PC-3 (cell line): ENCODE measurements at regions of chr7 and their contacts with region 1.

Region 1: DNA sequence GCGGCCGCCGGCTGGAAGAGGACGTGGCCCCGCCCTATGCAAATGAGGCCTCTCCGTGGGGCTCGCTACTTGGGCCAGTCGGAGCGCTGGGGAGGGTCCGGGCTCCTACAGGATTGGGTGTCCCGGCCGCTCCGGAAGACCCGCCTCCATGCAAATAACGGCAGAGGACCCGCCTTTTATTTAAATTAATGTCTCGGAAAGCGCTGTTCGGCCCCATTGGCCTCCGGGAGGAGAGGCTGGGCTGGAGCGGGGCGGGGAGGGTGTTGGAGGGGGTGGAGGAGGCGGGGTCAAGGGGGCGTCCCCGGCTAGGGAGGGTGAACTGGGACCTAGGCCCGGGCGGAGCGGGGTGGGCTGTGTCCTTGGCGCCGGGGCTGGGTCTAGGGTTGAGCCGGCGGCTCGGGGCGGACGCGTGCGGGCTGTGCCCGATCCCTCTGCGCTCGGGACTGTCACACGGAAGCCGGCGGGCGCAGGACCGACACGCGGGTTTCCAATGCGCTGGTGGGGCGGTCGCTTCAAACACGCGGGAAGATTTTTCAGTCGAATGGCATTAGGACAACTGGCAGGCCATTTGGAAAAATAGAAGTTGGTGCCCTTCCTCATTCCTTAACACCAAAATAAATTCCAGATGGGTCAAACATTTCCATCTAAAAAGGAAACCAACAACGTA is 344 bp upstream of the POLM start:
- DNase-seq: peak; percentile 97
- ATAC-seq: peak; percentile 98
- H3K4me3 ChIP-seq: peak overlapping the region; percentile 66
- H3K27ac ChIP-seq: peak overlapping the region; percentile 21; the same call in 1 of the 2 replicates
- H3K4me1 ChIP-seq: peaks cover 10% of the 10 kb centered on the region
- H3K27me3 ChIP-seq: no peaks in the 10 kb centered on the region
- CTCF ChIP-seq: no peak

Region 2: DNA sequence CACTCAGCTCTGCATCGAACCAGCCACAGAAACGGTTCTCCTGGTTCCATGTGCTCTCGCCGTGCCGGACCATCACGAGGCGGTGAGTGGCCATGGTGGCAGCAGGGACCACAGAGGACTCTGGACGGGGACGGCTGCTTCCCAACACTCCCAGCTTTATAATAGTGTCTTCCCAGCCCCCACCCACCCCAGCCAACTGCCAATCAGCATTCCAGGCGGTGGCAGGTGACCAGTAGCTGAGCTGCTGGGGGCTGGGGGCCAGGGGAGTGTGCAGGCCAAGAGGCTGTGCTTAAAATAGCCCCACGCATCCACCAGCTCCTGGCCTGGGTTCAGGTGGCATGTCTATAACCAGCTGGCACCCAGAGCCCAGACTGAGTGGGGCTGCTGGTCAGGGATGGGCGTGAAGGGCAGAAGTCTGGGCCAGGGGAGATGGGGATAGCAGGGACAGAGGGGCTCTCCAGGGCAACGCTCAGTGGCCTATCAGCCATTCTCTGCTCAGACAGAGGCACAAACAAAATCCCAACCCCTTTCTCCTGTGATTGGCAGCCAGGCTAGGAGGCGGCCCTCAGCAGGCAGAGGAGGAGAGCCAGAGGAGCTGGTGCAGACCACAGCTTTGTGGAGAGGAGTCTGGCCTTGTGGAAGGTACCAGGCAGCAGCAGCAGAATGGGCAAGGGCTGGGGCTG is 17.1 kb before region 1 on chr7 and contains the start of gene PGAM2:
- CTCF ChIA-PET with region 1: interaction called, 11 read pairs
- POLR2A ChIA-PET with region 1: no interaction called
- intact Hi-C with region 1: no loop called
- DNase-seq: no peak
- ATAC-seq: peak; percentile 39
- H3K4me3 ChIP-seq: no peak within 1 kb of the TSS
- H3K27ac ChIP-seq: no peak within 1 kb of the TSS
- H3K4me1 ChIP-seq: no peaks in the 10 kb centered on the region; the same call in 1 of the 2 replicates
- H3K27me3 ChIP-seq: no peaks in the 10 kb centered on the region
- CTCF ChIP-seq: no peak
- total RNA-seq, gene PGAM2: 0.35 and 0.95 TPM in 2 replicates

Region 3: DNA sequence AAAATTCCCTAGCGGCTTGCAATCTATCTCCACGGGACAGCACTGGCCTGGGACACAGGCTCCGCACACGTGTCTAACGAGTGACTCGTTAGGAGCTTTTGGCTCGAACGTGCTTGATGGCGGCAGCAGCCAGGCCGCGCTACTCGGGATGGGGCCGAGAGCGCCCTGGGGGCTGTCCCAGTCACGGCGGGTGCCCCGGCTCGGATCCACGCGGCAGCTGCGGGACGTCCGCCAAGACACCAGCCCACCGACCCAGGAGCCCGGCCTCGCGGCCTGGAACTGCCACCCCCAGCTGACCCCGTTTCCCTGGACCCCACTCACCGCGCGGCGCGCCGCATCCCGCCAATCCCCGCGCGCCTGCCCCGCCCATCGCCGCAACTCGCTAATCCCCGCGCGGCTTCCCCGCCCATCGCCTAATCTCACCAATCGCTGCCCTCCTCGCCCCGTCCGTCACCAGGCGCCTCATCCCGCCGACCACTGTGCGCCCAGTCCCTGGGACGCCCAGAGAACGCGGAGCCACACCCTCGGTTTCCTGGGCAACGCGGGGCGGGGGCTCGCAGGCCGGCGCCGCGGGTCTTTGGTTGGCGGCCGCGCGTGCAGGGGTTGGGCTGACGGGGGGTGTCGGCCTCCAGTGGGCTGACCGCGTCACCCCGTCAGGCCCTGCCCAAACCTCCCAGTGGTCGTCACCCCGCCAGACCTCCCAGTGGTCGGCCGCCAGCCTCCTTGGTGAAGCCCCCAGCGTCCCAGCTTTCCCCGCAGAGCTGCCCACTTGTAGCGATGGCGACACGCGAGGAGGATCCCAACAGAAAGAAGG is 40.7 kb after region 1 on chr7 and contains the start of gene POLD2:
- CTCF ChIA-PET with region 1: no interaction called
- POLR2A ChIA-PET with region 1: no interaction called
- intact Hi-C with region 1: loop called (anchors 2 kb)
- DNase-seq: peak; percentile 96
- ATAC-seq: peak; percentile 99
- H3K4me3 ChIP-seq: peak within 1 kb of the TSS; percentile 81
- H3K27ac ChIP-seq: peak within 1 kb of the TSS; percentile 49
- H3K4me1 ChIP-seq: peaks cover 20% of the 10 kb centered on the region
- H3K27me3 ChIP-seq: no peaks in the 10 kb centered on the region
- CTCF ChIP-seq: no peak
- total RNA-seq, gene POLD2: 224 and 225 TPM in 2 replicates

Region 4: GRCh38 chr7:44267719-44268421 is 185.2 kb after region 1 on chr7:
- CTCF ChIA-PET with region 1: no interaction called
- POLR2A ChIA-PET with region 1: no interaction called
- intact Hi-C with region 1: no loop called
- DNase-seq: no peak
- ATAC-seq: no peak
- H3K4me3 ChIP-seq: no peak overlapping the region
- H3K27ac ChIP-seq: no peak overlapping the region
- H3K4me1 ChIP-seq: peaks cover 19% of the 10 kb centered on the region
- H3K27me3 ChIP-seq: no peaks in the 10 kb centered on the region
- CTCF ChIP-seq: no peak

Region 5: GRCh38 chr7:44431091-44431608 is 348.5 kb after region 1 on chr7:
- CTCF ChIA-PET with region 1: no interaction called
- POLR2A ChIA-PET with region 1: no interaction called
- intact Hi-C with region 1: no loop called
- DNase-seq: peak; percentile 9
- ATAC-seq: peak; percentile 75
- H3K4me3 ChIP-seq: no peak overlapping the region
- H3K27ac ChIP-seq: no peak overlapping the region
- H3K4me1 ChIP-seq: no peaks in the 10 kb centered on the region
- H3K27me3 ChIP-seq: no peaks in the 10 kb centered on the region
- CTCF ChIP-seq: peak; percentile 33; the same call in 1 of the 2 replicates